Activated CD4-positive, alpha-beta T cell treated with anti-CD3 and anti-CD28 coated beads for 36 hours (primary cell): ENCODE measurements at regions of chrX and their contacts with region 1.

Region 1: GRCh38 chrX:53563324-53563723 is 123.2 kb downstream of the HUWE1 start:
- DNase-seq: peak; percentile 12
- ATAC-seq: peak; percentile 55
- H3K4me3 Mint-ChIP-seq: no peak overlapping the region
- H3K27ac Mint-ChIP-seq: no peak overlapping the region
- H3K4me1 Mint-ChIP-seq: no peaks in the 10 kb centered on the region
- H3K27me3 Mint-ChIP-seq: no peaks in the 10 kb centered on the region

Region 2: GRCh38 chrX:53526999-53527398 is 36.3 kb before region 1 on chrX:
- CTCF ChIA-PET with region 1: interaction called, 3 read pairs
- POLR2A ChIA-PET with region 1: interaction called, 11 read pairs
- intact Hi-C with region 1: no loop called
- DNase-seq: no peak
- ATAC-seq: no peak
- H3K4me3 Mint-ChIP-seq: no peak overlapping the region
- H3K27ac Mint-ChIP-seq: no peak overlapping the region
- H3K4me1 Mint-ChIP-seq: no peaks in the 10 kb centered on the region
- H3K27me3 Mint-ChIP-seq: no peaks in the 10 kb centered on the region

Region 3: GRCh38 chrX:53550756-53551463 is 12.4 kb before region 1 on chrX:
- CTCF ChIA-PET with region 1: no interaction called
- POLR2A ChIA-PET with region 1: no interaction called
- intact Hi-C with region 1: no loop called
- DNase-seq: no peak
- ATAC-seq: no peak
- H3K4me3 Mint-ChIP-seq: no peak overlapping the region
- H3K27ac Mint-ChIP-seq: no peak overlapping the region
- H3K4me1 Mint-ChIP-seq: no peaks in the 10 kb centered on the region
- H3K27me3 Mint-ChIP-seq: no peaks in the 10 kb centered on the region

Region 4: DNA sequence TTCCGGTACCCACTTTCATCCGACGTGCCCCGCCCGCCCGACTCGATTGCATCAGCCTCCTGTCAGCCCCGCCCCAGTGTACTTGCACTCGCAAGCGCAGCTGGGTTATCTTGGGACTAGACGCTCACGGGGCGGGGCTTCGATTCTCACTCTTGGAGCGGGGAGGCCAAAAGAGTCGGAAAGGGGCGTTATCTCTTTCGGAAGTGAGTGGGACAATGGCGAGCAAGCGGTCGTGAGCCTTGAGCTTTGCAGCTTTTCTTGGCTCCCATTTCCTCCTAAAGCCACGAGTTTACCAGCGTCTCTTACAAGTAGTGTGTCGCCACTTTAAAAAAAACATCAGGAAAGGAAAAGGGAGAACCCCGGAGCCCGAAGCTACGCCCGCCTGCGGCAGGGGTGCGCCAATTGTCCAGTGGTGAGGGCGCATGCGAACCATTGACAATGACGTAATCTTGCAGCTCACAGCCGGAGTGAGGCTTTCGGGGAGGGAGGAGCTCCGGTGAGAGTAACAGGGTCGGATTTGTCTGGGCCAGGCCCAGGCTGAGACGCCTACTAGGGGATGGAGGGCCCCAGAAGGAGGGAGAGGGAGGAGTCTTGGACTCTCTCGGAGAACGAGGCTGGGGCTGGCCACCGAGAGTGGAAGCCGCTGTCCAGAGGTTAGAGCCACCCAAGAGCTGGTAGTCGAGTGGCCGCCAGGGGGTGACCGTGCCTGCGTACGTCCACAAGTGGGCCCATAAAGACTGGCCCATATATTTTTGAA is 1076.2 kb after region 1 on chrX:
- CTCF ChIA-PET with region 1: no interaction called
- POLR2A ChIA-PET with region 1: no interaction called
- intact Hi-C with region 1: no loop called
- DNase-seq: peak; percentile 96
- ATAC-seq: peak; percentile 93
- H3K4me3 Mint-ChIP-seq: peak overlapping the region; percentile 84
- H3K27ac Mint-ChIP-seq: peak overlapping the region; percentile 92
- H3K4me1 Mint-ChIP-seq: peaks cover 6% of the 10 kb centered on the region
- H3K27me3 Mint-ChIP-seq: no peaks in the 10 kb centered on the region

Region 5: DNA sequence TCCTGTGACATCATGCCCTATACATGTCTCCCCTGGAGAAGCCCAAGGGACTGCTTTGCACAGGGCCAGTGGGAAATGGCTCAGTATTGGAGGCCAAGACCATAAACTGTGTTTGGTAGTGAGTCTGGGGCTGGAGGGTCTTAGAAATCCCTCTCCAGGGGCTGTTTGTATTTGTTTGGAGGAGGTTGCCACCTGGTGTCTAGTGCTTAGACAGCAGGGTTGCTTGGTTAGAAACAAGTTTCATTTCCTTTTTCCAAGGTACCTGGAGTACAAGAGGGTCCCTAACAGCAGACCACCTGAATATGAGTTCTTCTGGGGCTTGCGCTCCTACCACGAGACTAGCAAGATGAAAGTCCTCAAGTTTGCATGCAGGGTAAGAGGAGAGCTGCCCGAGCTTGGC is 1364.1 kb after region 1 on chrX:
- CTCF ChIA-PET with region 1: no interaction called
- POLR2A ChIA-PET with region 1: no interaction called
- intact Hi-C with region 1: no loop called
- DNase-seq: no peak
- ATAC-seq: no peak
- H3K4me3 Mint-ChIP-seq: no peak overlapping the region
- H3K27ac Mint-ChIP-seq: no peak overlapping the region
- H3K4me1 Mint-ChIP-seq: no peaks in the 10 kb centered on the region
- H3K27me3 Mint-ChIP-seq: no peaks in the 10 kb centered on the region